ENCODE measurements at regions of chrX and their contacts with region 1.

Region 1: DNA sequence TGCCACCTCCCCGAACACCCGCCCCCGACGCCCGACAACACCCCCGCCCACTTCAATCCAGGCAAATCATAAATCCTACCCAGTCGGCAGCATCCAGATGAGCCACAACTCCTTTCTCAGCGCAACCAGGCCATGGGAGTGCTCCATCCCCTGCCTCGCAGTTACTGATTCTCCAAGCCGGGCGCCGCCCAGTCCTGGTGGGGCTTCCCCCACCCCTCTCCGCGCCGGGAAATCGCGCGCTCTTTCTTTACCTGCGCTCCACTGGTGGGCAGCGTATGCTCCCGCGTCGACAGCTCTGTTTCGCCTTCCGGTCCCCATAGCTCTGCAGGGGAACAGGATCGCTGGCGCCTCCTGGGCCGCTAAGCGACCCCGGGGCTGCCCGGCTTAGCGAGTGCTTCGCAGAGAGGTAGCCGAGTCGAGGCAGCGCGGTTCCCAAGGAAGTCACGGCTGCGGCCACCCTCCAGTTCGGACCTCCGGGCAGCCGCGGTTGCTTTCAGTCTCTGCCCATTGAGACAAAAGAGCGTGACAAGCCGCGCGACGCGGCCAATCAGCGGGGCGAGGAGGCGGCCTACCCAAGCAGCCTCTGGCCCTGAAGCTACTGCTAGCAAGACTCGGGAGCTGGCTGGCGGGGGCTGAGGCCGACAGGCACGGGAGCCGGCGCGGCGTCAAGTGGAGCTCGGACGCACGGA is 43.7 kb upstream of the TMSB15B start:
- DNase-seq: peak in 1 of 2 donors; percentile 83
- H3K4me3 ChIP-seq: peak overlapping the region; percentile 62 to 78
- H3K27ac ChIP-seq: peak overlapping the region; percentile 87 to 88
- H3K4me1 ChIP-seq: no peaks in the 10 kb centered on the region
- H3K27me3 ChIP-seq: no peaks in the 10 kb centered on the region
- CTCF ChIP-seq: no peak

Region 2: GRCh38 chrX:103831803-103832544 is 86.8 kb before region 1 on chrX and contains the start of gene RAB9B:
- intact Hi-C with region 1: loop called (anchors 5 kb)
- DNase-seq: peak in 1 of 2 donors; percentile 81
- H3K4me3 ChIP-seq: peak within 1 kb of the TSS; percentile 59 to 80
- H3K27ac ChIP-seq: peak within 1 kb of the TSS; percentile 69 to 87
- H3K4me1 ChIP-seq: no peaks in the 10 kb centered on the region
- H3K27me3 ChIP-seq: peaks cover 8% of the 10 kb centered on the region
- CTCF ChIP-seq: no peak
- total RNA-seq, gene RAB9B: 0.43 TPM

Region 3: GRCh38 chrX:103845165-103845653 is 73.5 kb before region 1 on chrX:
- intact Hi-C with region 1: loop called (anchors 2 kb)
- DNase-seq: peak in 1 of 2 donors; percentile 81
- H3K4me3 ChIP-seq: no peak overlapping the region
- H3K27ac ChIP-seq: no peak overlapping the region
- H3K4me1 ChIP-seq: no peaks in the 10 kb centered on the region
- H3K27me3 ChIP-seq: peaks cover 3% of the 10 kb centered on the region
- CTCF ChIP-seq: peak; percentile 51 to 65 (median 57)

Region 4: GRCh38 chrX:104007242-104007641 is 88.5 kb after region 1 on chrX:
- intact Hi-C with region 1: loop called (anchors 1 kb)
- DNase-seq: no peak
- H3K4me3 ChIP-seq: no peak overlapping the region
- H3K27ac ChIP-seq: no peak overlapping the region
- H3K4me1 ChIP-seq: no peaks in the 10 kb centered on the region
- H3K27me3 ChIP-seq: no peaks in the 10 kb centered on the region
- CTCF ChIP-seq: no peak

Region 5: GRCh38 chrX:104113222-104113965 is 194.7 kb after region 1 on chrX:
- intact Hi-C with region 1: loop called (anchors 2 kb)
- DNase-seq: peak in 1 of 2 donors; percentile 75
- H3K4me3 ChIP-seq: peak overlapping the region; percentile 46 to 57
- H3K27ac ChIP-seq: peak overlapping the region; percentile 69 to 77
- H3K4me1 ChIP-seq: no peaks in the 10 kb centered on the region
- H3K27me3 ChIP-seq: no peaks in the 10 kb centered on the region
- CTCF ChIP-seq: peak; percentile 35 to 63 (median 42)